ENCODE measurements at regions of chr1 and their contacts with region 1.

Region 1: DNA sequence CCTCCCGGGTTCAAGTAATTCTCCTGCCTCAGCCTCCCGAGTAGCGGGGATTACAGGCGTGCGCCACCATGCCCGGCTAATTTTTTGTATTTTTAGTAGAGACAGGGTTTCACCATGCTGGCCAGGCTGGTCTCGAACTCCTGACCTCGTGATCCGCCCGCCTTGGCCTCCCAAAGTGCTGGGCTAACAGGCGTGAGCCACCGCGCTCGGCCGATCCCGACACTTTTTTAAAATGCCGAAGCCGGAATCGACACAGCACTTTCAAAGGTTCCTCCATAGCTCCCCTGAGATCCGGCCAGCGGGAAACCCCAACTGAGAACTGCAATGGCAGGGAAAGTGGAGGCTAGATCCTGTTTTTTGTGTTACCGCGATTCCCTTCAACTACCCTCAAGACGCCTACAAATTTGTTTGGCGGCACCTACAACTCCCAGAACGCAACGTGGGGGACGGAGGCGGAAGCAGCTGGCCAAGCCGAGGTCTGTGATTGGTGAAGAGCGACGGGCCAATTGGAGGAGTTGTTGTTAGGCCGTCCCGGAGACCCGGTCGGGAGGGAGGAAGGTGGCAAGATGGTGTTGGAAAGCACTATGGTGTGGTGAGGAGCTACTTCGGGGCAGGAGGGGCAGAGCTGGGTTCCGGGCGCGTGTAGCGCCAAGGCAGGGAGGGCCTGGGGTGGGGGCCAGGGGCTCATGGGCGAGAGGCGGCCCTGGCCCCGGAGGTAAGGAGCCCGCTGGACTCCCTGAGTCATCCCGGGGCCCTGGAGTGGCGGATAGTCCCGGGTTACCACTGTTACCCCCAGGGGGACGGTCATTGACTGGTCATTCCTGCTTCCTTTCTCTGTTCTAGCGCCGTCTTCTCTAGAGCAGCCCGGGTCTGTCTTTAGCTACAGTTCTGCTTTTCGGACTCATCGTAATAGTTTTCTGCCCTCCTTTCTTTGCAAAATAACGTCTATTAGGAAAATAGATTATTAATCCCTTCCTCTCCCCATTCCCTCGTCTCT is at the start of gene PSMD4:
- DNase-seq: peak; percentile 99
- CTCF ChIP-seq: no peak

Region 2: DNA sequence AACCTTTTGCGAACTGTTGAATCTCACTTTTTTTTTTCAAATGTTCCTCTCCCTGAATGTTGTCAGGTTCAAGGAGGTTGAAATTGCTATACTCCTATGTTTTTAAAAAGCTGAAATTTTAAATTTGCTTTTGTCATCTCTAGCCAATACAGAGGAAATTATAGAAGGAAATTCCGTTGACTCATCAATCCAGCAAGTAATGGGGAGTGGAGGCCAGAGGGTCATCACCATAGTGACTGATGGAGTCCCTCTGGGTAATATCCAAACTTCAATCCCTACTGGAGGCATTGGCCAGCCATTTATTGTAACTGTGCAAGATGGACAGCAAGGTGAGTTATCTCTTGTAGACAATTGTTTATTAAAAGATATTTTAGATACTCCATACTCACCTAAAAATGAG is 147.6 kb before region 1 on chr1:
- CTCF ChIA-PET with region 1: interaction called, 33 read pairs
- POLR2A ChIA-PET with region 1: no interaction called
- DNase-seq: no peak
- CTCF ChIP-seq: no peak

Region 3: DNA sequence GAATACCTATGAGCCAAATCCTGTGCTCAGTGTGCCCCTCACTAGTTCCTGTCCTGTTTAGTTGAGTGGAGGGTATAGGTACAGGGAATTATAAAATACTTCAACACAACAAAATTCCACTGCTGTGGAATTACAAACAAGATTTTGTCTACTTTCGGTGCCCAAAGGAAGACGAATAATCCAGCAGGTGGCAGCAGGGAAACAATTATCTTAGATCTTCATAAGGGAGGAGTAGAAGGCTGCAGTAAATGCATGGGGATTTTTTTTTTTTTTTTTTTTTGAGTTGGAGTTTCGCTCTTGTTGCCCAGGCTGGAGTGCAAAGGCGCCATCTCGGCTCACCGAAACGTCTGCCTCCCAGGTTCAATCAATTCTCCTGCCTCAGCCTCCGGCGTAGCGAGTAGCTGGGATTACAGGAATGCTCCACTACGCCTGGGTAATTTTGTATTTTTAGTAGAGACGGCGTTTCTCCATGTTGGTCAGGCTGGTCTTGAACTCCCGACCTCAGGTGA is 58.2 kb before region 1 on chr1:
- CTCF ChIA-PET with region 1: interaction called, 11 read pairs
- POLR2A ChIA-PET with region 1: no interaction called
- DNase-seq: peak; percentile 56
- CTCF ChIP-seq: peak; percentile 56

Region 4: DNA sequence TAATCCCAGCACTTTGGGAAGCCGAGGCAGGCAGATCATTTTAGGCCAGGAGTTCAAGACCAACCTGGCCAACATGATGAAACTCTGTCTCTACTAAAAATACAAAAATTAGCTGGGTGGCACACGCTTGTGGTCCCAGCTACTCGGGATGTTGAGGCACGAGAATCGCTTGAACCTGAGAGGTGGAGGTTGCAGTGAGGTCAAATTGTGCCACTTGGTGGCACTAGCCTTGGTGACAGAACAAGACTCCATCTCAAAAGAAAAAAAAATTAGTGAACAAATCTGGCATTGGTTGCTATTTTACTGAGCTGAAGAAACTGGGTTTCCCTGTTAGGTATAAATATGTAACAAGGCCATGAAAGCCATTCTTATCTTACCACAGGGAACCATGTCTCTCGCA is 26.9 kb before region 1 on chr1:
- CTCF ChIA-PET with region 1: interaction called, 13 read pairs
- POLR2A ChIA-PET with region 1: no interaction called
- DNase-seq: no peak
- CTCF ChIP-seq: no peak

Region 5: DNA sequence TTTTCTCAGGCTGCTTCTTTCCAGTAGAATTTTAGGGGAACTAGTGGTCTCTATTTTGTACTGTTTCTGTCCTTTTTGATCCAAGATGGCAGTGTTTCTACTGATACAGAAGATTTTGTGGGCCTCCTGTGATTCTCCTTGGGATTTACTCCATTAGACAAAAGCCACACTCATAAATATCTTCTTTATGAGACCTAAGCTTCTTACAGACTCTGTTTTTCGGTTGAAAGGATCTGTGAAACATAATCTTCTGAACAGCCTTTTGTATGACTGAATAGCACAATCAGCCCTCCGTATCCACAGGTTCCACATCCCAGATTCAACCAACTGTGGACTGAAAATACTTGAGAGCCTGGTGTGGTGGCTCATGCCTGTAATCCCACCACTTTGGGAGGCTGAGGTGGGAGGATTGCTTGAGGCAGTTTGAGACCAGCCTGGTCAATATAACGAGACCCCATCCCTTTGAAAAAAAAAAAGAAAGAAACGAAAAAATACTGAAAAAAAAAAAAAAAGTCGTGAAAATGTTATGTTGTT is 10.8 kb before region 1 on chr1:
- CTCF ChIA-PET with region 1: interaction called, 25 read pairs
- POLR2A ChIA-PET with region 1: no interaction called
- DNase-seq: no peak
- CTCF ChIP-seq: no peak

Region 6: DNA sequence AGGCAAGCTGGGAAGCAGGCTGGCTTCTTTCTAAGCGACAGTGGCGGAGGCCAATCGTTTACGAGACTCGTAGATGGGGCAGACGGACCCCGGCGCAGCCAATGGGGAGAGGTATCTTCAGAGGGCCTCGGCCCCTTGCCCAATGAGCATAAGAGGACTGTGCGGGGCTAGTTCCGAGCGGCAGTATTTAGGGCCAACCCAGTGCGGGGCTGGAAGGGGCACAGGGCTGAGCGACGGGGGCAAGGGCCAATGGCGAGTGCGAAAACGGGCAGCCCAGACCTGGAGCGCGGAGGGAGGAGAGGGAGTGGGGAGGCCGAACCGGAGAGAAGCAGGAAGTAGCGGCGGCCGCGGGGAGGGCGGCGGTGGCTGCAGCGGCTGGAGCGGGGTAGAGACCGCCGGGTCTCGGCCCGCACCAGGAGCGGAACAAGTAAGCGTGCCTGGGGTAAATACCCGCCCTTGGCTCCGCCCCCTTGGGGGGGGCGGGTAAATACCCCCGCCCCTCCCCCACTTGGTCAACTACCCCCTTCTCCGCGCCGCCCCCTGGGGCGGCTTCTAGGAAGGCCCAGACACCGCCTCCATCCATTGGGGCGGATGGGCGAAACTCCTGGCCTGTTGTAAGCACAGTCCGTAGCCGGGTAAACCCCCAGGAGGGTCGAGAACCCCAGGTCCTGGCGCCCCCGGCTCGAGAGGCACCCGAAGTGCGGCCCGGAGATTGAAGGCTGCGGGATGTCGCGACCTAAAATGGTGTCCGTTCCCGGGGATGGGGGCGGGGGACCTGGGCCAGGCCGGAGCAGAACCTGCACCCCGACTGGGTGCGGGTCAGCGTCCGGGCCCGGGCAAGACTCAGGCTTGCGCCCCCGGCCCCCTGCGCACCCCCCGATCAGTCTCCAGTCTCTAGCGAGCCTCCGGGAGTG is 27.7 kb after region 1 on chr1 and contains the start of gene ZNF687:
- CTCF ChIA-PET with region 1: interaction called, 13 read pairs
- POLR2A ChIA-PET with region 1: interaction called, 5 read pairs
- DNase-seq: peak; percentile 98
- CTCF ChIP-seq: no peak